Left ventricle myocardium superior (tissue), 1 donor: ENCODE measurements at regions of chr12 and their contacts with region 1.

Region 1: GRCh38 chr12:55935738-55936151 is 4.8 kb downstream of the DGKA start:
- DNase-seq: peak; percentile 62
- ATAC-seq: peak; percentile 21

Region 2: GRCh38 chr12:55743116-55743921 is 192.4 kb before region 1 on chr12 and contains the start of gene GDF11:
- intact Hi-C with region 1: loop called (anchors 5 kb)
- DNase-seq: peak; percentile 75
- ATAC-seq: peak; percentile 19
- total RNA-seq, gene GDF11: 8.9 TPM

Region 3: GRCh38 chr12:55842681-55843429 is 92.9 kb before region 1 on chr12 and contains the start of gene MMP19:
- intact Hi-C with region 1: no loop called
- DNase-seq: no peak
- ATAC-seq: peak; percentile 64
- total RNA-seq, gene MMP19: 2.1 TPM